CD4-positive, alpha-beta T cell (primary cell): ENCODE measurements at regions of chr22 and their contacts with region 1.

Region 1: DNA sequence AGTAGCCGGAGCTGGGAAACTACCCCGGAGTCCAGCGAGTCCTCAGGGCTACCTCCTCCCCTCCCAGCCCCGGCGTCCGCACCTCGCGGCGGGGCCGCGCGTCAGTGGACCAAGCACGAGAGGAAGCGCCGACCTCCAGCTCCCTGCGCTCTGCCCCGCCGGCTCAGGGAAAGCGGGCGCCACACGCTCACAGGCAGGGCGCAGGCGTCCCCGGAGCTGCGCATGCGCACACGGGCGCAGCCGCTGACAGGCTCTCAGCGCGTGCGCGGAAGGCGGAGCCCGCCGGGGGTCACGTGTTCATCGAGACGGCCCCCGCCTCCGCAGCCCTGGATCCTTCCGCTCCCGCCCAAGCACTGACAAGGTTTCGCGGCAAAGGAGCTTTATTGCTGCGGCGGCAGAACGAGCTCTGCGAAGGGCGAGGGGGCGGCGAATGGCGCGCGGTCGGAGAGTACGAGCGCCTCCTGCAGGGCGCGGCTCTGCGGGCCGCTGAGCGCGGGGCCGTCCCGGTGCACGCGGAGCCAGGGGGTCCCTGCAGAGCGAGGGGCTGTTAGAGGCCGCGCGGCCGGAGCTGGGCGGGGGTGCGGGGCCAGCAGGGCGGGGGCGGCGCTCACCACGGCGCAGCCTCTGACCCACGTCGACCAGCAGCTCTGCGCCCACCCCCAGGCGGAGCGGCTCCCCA is at the start of gene SCO2:
- DNase-seq: peak; percentile 95 to 99 (median 98)
- ATAC-seq: peak; percentile 72
- H3K4me3 ChIP-seq: peak within 1 kb of the TSS; percentile 70
- H3K4me3 Mint-ChIP-seq: peak within 1 kb of the TSS; percentile 91
- H3K27ac ChIP-seq: peak within 1 kb of the TSS; percentile 81 to 88
- H3K27ac Mint-ChIP-seq: peak within 1 kb of the TSS; percentile 89
- H3K4me1 ChIP-seq: peaks cover 56% of the 10 kb centered on the region
- H3K4me1 Mint-ChIP-seq: peaks cover 28% of the 10 kb centered on the region
- H3K27me3 ChIP-seq: no peaks in the 10 kb centered on the region
- H3K27me3 Mint-ChIP-seq: no peaks in the 10 kb centered on the region
- CTCF ChIP-seq: no peak
- total RNA-seq, gene SCO2: 0.61 to 5.6 TPM

Region 2: GRCh38 chr22:50199251-50199721 is 326.2 kb before region 1 on chr22:
- CTCF ChIA-PET with region 1: no interaction called
- POLR2A ChIA-PET with region 1: no interaction called
- intact Hi-C with region 1: no loop called
- DNase-seq: peak in 1 of 14 experiments; percentile 28
- ATAC-seq: no peak
- H3K4me3 ChIP-seq: no peak overlapping the region
- H3K4me3 Mint-ChIP-seq: peak overlapping the region; percentile 84
- H3K27ac ChIP-seq: peak overlapping the region in 1 of 2 donors; percentile 40
- H3K27ac Mint-ChIP-seq: peak overlapping the region; percentile 85
- H3K4me1 ChIP-seq: peaks cover 33% of the 10 kb centered on the region
- H3K4me1 Mint-ChIP-seq: peaks cover 17% of the 10 kb centered on the region
- H3K27me3 ChIP-seq: no peaks in the 10 kb centered on the region
- H3K27me3 Mint-ChIP-seq: no peaks in the 10 kb centered on the region
- CTCF ChIP-seq: no peak

Region 3: DNA sequence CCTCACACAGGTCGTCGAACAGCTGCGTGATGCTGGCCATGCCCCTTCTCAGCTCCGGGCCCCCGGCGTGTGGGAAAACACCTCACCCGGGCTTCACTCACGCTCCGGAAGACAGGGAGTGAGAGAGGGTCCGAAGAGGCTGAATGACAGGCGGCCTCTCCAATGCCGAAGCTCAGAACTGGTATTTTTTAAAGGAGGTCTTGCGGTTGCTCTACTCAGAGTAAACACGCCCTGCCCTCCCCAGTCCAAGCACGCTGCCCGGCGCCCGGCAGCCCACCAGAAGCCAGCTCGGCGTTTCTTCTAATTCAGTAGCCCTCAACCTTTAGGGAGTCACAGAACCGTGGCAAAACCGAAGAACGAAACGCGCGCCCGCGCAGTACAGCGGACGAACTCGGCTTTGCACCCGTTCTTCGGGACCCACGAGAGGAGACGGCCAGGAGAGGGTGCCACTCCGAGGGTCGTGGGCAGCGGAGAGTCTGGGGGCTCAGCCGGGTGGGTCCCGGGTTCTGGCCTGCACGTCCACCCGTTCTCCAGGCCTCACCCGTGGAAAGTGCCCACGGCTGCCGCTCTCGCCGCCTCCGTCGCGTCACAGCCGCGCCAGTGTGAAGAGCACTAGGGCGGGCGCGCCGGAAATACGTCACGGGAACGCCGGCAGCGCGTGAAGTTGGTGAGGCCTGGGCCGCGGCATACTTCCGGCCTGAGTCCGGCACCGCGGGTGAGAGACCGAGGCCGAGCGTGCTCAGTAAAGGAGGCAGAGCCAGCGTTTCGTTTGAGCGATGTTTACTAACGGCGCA is 280.9 kb before region 1 on chr22 and contains the start of gene TUBGCP6:
- CTCF ChIA-PET with region 1: interaction called, 5 read pairs
- POLR2A ChIA-PET with region 1: interaction called, 14 read pairs
- intact Hi-C with region 1: no loop called
- DNase-seq: peak; percentile 76 to 97 (median 90)
- ATAC-seq: peak; percentile 73
- H3K4me3 ChIP-seq: peak within 1 kb of the TSS; percentile 100
- H3K4me3 Mint-ChIP-seq: peak within 1 kb of the TSS; percentile 99
- H3K27ac ChIP-seq: peak within 1 kb of the TSS; percentile 98
- H3K27ac Mint-ChIP-seq: peak within 1 kb of the TSS; percentile 89
- H3K4me1 ChIP-seq: peaks cover 92% of the 10 kb centered on the region
- H3K4me1 Mint-ChIP-seq: peaks cover 47% of the 10 kb centered on the region
- H3K27me3 ChIP-seq: no peaks in the 10 kb centered on the region
- H3K27me3 Mint-ChIP-seq: no peaks in the 10 kb centered on the region
- CTCF ChIP-seq: peak; percentile 33
- total RNA-seq, gene TUBGCP6: 124 to 126 TPM

Region 4: GRCh38 chr22:50469377-50470305 is 55.9 kb before region 1 on chr22:
- CTCF ChIA-PET with region 1: interaction called, 20 read pairs
- POLR2A ChIA-PET with region 1: interaction called, 39 read pairs
- intact Hi-C with region 1: loop called in 1 of 2 experiments (anchors 5 kb)
- DNase-seq: peak; percentile 88 to 99 (median 98)
- ATAC-seq: peak; percentile 86
- H3K4me3 ChIP-seq: peak overlapping the region; percentile 49
- H3K4me3 Mint-ChIP-seq: peak overlapping the region; percentile 89
- H3K27ac ChIP-seq: peak overlapping the region; percentile 82 to 94
- H3K27ac Mint-ChIP-seq: peak overlapping the region; percentile 94
- H3K4me1 ChIP-seq: peaks cover 72% of the 10 kb centered on the region
- H3K4me1 Mint-ChIP-seq: peaks cover 62% of the 10 kb centered on the region
- H3K27me3 ChIP-seq: no peaks in the 10 kb centered on the region
- H3K27me3 Mint-ChIP-seq: no peaks in the 10 kb centered on the region
- CTCF ChIP-seq: peak; percentile 21

Region 5: DNA sequence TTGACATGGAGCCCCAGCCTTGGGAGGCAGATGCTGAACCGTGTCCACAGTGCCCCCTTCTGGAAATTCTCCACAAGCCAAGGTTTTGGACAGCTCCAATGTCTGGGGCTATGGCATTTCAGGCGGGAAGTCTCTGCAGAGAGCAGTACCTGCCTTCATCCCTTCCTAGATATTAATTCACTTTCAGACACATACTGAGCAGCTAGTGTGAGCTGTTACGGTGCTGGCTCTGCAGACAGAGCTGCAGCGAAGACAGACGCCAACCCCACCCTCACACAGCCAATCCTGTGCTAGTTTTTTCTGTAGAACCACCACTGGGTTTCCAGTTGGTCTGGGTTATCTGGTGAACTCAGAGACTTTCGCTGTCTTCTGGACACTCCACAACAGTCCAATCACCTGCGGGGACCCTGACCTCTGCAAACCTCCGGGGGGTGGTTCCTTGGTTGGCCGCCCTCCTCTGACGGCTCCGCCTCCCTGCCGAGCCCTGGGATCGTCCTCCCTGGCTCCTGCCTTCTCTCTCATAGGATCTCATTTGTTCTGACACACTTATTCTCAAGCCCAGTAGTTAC is 27.1 kb before region 1 on chr22:
- CTCF ChIA-PET with region 1: interaction called, 21 read pairs
- POLR2A ChIA-PET with region 1: interaction called, 9 read pairs
- intact Hi-C with region 1: no loop called
- DNase-seq: peak; percentile 52 to 84 (median 64)
- ATAC-seq: peak; percentile 97
- H3K4me3 ChIP-seq: no peak overlapping the region
- H3K4me3 Mint-ChIP-seq: no peak overlapping the region
- H3K27ac ChIP-seq: no peak overlapping the region
- H3K27ac Mint-ChIP-seq: no peak overlapping the region
- H3K4me1 ChIP-seq: peaks cover 5% of the 10 kb centered on the region
- H3K4me1 Mint-ChIP-seq: peaks cover 9% of the 10 kb centered on the region
- H3K27me3 ChIP-seq: no peaks in the 10 kb centered on the region
- H3K27me3 Mint-ChIP-seq: no peaks in the 10 kb centered on the region
- CTCF ChIP-seq: peak; percentile 79

Region 6: GRCh38 chr22:50537765-50538164 is 12.2 kb after region 1 on chr22:
- CTCF ChIA-PET with region 1: interaction called, 66 read pairs
- POLR2A ChIA-PET with region 1: interaction called, 258 read pairs
- intact Hi-C with region 1: no loop called
- DNase-seq: no peak
- ATAC-seq: no peak
- H3K4me3 ChIP-seq: no peak overlapping the region
- H3K4me3 Mint-ChIP-seq: no peak overlapping the region
- H3K27ac ChIP-seq: peak overlapping the region; percentile 92 to 99
- H3K27ac Mint-ChIP-seq: peak overlapping the region; percentile 99
- H3K4me1 ChIP-seq: peaks cover 51% of the 10 kb centered on the region
- H3K4me1 Mint-ChIP-seq: peaks cover 43% of the 10 kb centered on the region
- H3K27me3 ChIP-seq: no peaks in the 10 kb centered on the region
- H3K27me3 Mint-ChIP-seq: peaks cover 9% of the 10 kb centered on the region
- CTCF ChIP-seq: no peak

Region 7: GRCh38 chr22:50562523-50563412 is 37.2 kb after region 1 on chr22 and contains the start of gene SYCE3:
- CTCF ChIA-PET with region 1: interaction called, 70 read pairs
- POLR2A ChIA-PET with region 1: interaction called, 56 read pairs
- intact Hi-C with region 1: loop called (anchors 2 to 5 kb)
- DNase-seq: peak; percentile 93 to 99 (median 96)
- ATAC-seq: peak; percentile 94
- H3K4me3 ChIP-seq: peak within 1 kb of the TSS; percentile 84
- H3K4me3 Mint-ChIP-seq: peak within 1 kb of the TSS; percentile 96
- H3K27ac ChIP-seq: no peak within 1 kb of the TSS
- H3K27ac Mint-ChIP-seq: peak within 1 kb of the TSS; percentile 85
- H3K4me1 ChIP-seq: peaks cover 10% of the 10 kb centered on the region
- H3K4me1 Mint-ChIP-seq: peaks cover 16% of the 10 kb centered on the region
- H3K27me3 ChIP-seq: no peaks in the 10 kb centered on the region
- H3K27me3 Mint-ChIP-seq: no peaks in the 10 kb centered on the region
- CTCF ChIP-seq: peak; percentile 84
- total RNA-seq, gene SYCE3: not detected